Panc1 (cell line): ENCODE measurements at regions of chr4 and their contacts with region 1.

Region 1: GRCh38 chr4:53804719-53805118 is 213.4 kb upstream of the LNX1 start:
- DNase-seq: no peak
- ATAC-seq: no peak
- H3K4me3 ChIP-seq: no peak overlapping the region
- H3K27ac ChIP-seq: no peak overlapping the region
- H3K4me1 ChIP-seq: no peaks in the 10 kb centered on the region
- H3K27me3 ChIP-seq: no peaks in the 10 kb centered on the region
- CTCF ChIP-seq: peak; percentile 61

Region 2: GRCh38 chr4:53861856-53862610 is 57.3 kb after region 1 on chr4:
- CTCF ChIA-PET with region 1: no interaction called
- POLR2A ChIA-PET with region 1: no interaction called
- in situ Hi-C with region 1: no loop called
- intact Hi-C with region 1: loop called (anchors 10 kb)
- DNase-seq: no peak
- ATAC-seq: no peak
- H3K4me3 ChIP-seq: no peak overlapping the region
- H3K27ac ChIP-seq: no peak overlapping the region
- H3K4me1 ChIP-seq: no peaks in the 10 kb centered on the region
- H3K27me3 ChIP-seq: no peaks in the 10 kb centered on the region
- CTCF ChIP-seq: no peak